ENCODE measurements at regions of chr1 and their contacts with region 1.

Region 1: DNA sequence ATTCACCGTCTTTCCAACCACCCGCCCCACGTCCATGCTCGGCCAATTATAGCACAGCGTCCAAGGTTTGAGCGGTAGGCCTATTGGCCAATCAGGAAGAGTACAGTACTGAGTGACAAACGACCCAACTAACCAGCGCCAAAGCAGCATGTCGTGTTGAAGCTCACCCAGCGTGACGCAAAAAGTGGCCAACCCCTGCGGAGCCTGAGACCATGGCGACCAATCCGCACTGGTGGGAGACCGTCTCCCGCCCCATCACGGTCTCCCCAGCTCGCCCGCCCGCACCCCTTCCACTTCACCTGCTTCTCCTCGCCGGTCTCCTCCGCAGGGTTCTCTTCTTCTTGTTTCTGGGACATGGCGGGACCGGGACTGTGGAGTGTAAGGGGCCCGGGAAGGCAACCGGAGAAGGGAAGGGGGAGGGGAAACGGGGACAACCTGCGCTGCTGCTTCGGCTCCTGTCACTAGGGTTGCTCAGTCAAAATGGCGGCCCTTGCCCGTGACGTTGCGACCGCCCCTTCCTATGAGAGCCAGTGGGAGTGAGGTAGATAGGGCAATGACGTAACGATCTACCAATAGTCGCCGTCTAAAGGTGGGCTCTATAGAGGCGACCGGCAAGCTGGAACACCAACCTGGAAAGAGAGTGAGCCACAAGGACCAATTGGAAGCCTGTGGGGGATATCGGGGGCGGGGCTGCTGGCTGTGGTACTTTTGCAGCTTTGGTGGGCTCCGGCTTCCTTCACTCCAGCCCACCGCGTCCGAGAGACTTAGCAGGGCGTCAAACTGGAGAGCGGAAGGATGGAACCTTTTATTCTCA is at the start of gene ENSA:
- DNase-seq: peak; percentile 84
- ATAC-seq: peak; percentile 88
- H3K4me3 Mint-ChIP-seq: no peak within 1 kb of the TSS
- H3K27ac Mint-ChIP-seq: no peak within 1 kb of the TSS
- H3K4me1 Mint-ChIP-seq: peaks cover 21% of the 10 kb centered on the region
- H3K27me3 Mint-ChIP-seq: no peaks in the 10 kb centered on the region
- CTCF ChIP-seq: no peak
- total RNA-seq, gene ENSA: 202 and 227 TPM in 2 replicates

Region 2: GRCh38 chr1:150213170-150214098 is 415.9 kb before region 1 on chr1:
- CTCF ChIA-PET with region 1: no interaction called
- POLR2A ChIA-PET with region 1: no interaction called
- intact Hi-C with region 1: no loop called
- DNase-seq: peak; percentile 77
- ATAC-seq: peak; percentile 99
- H3K4me3 Mint-ChIP-seq: peak overlapping the region; percentile 90
- H3K27ac Mint-ChIP-seq: peak overlapping the region; percentile 94
- H3K4me1 Mint-ChIP-seq: peaks cover 15% of the 10 kb centered on the region
- H3K27me3 Mint-ChIP-seq: no peaks in the 10 kb centered on the region
- CTCF ChIP-seq: no peak

Region 3: GRCh38 chr1:150268705-150269403 is 360.5 kb before region 1 on chr1 and contains the start of gene APH1A:
- CTCF ChIA-PET with region 1: no interaction called
- POLR2A ChIA-PET with region 1: no interaction called
- intact Hi-C with region 1: no loop called
- DNase-seq: peak; percentile 86
- ATAC-seq: peak; percentile 97
- H3K4me3 Mint-ChIP-seq: peak within 1 kb of the TSS; percentile 100
- H3K27ac Mint-ChIP-seq: peak within 1 kb of the TSS; percentile 94
- H3K4me1 Mint-ChIP-seq: peaks cover 32% of the 10 kb centered on the region
- H3K27me3 Mint-ChIP-seq: peaks cover 4% of the 10 kb centered on the region
- CTCF ChIP-seq: no peak
- total RNA-seq, gene APH1A: 145 TPM in 2 replicates

Region 4: DNA sequence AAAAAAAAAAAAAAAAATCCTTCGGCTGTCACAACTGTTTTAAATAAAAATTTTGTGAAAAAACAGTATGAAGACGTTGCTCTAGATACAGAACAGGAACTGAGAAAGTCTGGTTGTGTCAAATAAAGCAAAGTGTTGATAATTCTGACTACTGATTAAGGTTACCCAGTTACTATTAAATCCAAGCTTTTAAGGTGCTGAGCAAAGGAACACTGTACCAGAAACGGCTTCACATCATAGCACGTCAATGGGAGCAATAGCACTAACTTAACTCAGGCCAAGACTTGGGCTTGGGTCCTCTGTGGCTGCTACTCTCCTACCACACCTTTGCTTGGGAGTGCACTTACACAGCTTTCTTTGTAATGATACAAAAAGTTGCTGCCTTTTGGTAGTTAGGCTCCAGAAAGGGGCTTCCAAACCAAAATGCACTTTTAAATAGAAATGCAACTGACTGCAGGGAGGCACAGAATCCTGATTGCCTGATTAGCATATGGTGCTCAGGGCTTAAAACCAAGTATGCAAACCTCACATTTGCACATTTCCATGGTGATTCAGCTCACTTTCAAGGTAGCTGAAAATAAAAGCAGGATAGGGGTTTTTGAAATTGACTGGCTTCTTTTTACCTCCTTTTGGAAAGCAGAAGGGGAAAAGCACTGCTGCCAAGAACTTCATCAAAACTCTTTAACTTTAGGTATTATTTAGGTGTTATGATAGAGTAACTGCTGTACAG is 56.2 kb before region 1 on chr1:
- CTCF ChIA-PET with region 1: interaction called, 358 read pairs
- POLR2A ChIA-PET with region 1: interaction called, 189 read pairs
- intact Hi-C with region 1: no loop called
- DNase-seq: no peak
- ATAC-seq: peak; percentile 60
- H3K4me3 Mint-ChIP-seq: peak overlapping the region; percentile 70
- H3K27ac Mint-ChIP-seq: peak overlapping the region; percentile 88
- H3K4me1 Mint-ChIP-seq: peaks cover 90% of the 10 kb centered on the region
- H3K27me3 Mint-ChIP-seq: no peaks in the 10 kb centered on the region
- CTCF ChIP-seq: no peak

Region 5: GRCh38 chr1:150613061-150613920 is 16.0 kb before region 1 on chr1:
- CTCF ChIA-PET with region 1: interaction called, 4 read pairs
- POLR2A ChIA-PET with region 1: interaction called, 13 read pairs
- intact Hi-C with region 1: loop called (anchors 1 kb)
- DNase-seq: no peak
- ATAC-seq: peak; percentile 53
- H3K4me3 Mint-ChIP-seq: peak overlapping the region; percentile 65
- H3K27ac Mint-ChIP-seq: peak overlapping the region; percentile 96
- H3K4me1 Mint-ChIP-seq: peaks cover 51% of the 10 kb centered on the region
- H3K27me3 Mint-ChIP-seq: no peaks in the 10 kb centered on the region
- CTCF ChIP-seq: no peak

Region 6: GRCh38 chr1:150777544-150777943 is 148.2 kb after region 1 on chr1:
- CTCF ChIA-PET with region 1: no interaction called
- POLR2A ChIA-PET with region 1: no interaction called
- intact Hi-C with region 1: no loop called
- DNase-seq: no peak
- ATAC-seq: no peak
- H3K4me3 Mint-ChIP-seq: no peak overlapping the region
- H3K27ac Mint-ChIP-seq: no peak overlapping the region
- H3K4me1 Mint-ChIP-seq: no peaks in the 10 kb centered on the region
- H3K27me3 Mint-ChIP-seq: no peaks in the 10 kb centered on the region
- CTCF ChIP-seq: no peak

Region 7: DNA sequence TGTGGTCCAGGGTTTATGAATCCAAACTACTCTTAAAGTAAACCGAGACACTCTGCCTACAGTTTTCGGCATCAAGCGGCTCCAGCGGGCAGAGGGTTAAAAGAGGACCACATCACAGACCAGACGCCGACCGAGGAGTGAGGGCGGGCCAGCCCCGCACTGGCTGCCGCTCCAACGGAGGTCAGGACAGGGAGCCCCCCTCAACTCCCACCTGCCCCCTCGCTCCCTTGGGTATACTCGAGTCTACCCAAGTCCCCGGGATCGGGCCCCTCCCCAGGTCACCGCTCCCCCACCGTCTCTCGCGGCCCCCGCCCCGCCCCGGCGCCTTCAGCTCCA is 246.8 kb after region 1 on chr1:
- CTCF ChIA-PET with region 1: no interaction called
- POLR2A ChIA-PET with region 1: interaction called, 8 read pairs
- intact Hi-C with region 1: loop called (anchors 1 kb)
- DNase-seq: no peak
- ATAC-seq: peak; percentile 32
- H3K4me3 Mint-ChIP-seq: peak overlapping the region; percentile 92
- H3K27ac Mint-ChIP-seq: peak overlapping the region; percentile 88
- H3K4me1 Mint-ChIP-seq: peaks cover 31% of the 10 kb centered on the region
- H3K27me3 Mint-ChIP-seq: no peaks in the 10 kb centered on the region
- CTCF ChIP-seq: no peak

Region 8: GRCh38 chr1:151346769-151347522 is 717.6 kb after region 1 on chr1 and contains the start of gene RFX5:
- CTCF ChIA-PET with region 1: no interaction called
- POLR2A ChIA-PET with region 1: no interaction called
- intact Hi-C with region 1: loop called (anchors 10 kb)
- DNase-seq: peak; percentile 77
- ATAC-seq: peak; percentile 91
- H3K4me3 Mint-ChIP-seq: peak within 1 kb of the TSS; percentile 98
- H3K27ac Mint-ChIP-seq: peak within 1 kb of the TSS; percentile 100
- H3K4me1 Mint-ChIP-seq: peaks cover 55% of the 10 kb centered on the region
- H3K27me3 Mint-ChIP-seq: no peaks in the 10 kb centered on the region
- CTCF ChIP-seq: no peak
- total RNA-seq, gene RFX5: 222 and 262 TPM in 2 replicates

Measured in activated B cell treated with CpG ODN at 0.5 μM for 24 hours (primary cell).